Activated CD4-positive, alpha-beta T cell treated with anti-CD3 and anti-CD28 coated beads for 36 hours (primary cell): ENCODE measurements at regions of chr3 and their contacts with region 1.

Region 1: DNA sequence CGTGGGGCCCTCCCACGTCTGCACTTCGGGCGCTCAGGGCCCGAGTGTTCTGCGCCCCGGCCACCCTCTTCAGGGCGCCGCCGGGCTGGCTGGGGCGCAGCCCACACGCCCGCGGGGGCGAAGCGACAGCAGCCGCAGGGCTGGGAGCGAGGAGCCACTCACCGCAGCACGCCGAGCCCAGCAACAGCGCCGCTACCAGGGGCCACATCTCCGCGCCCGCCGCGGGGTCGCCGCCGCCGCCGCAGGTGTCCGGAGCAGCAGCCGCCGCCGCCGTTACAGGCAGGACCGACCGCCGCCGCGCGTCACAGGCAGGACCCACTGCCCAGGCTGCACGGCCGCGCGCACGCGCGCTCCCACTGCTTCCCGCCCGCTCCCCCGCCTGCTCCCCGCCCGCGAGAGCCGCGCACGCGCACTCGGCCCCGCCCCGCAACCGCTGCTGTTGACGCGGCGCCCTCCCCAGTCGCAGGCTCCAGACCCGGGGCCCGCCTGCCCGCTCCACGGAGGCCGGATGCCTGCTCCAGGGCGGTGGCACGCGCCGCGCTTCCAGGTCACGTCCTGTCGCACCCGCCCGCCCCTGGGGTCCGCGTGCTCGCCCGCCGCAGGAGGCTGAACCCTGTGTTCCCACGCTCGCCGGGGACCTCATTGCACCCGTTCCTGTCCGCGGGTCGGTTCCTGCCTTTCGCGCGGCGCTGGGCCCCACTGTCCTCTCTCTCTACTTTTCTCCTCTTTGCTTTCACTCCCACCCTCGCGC is at the start of gene CD47:
- DNase-seq: peak; percentile 97
- ATAC-seq: peak; percentile 63
- H3K4me3 Mint-ChIP-seq: no peak within 1 kb of the TSS
- H3K27ac Mint-ChIP-seq: peak within 1 kb of the TSS; percentile 100
- H3K4me1 Mint-ChIP-seq: peaks cover 31% of the 10 kb centered on the region
- H3K27me3 Mint-ChIP-seq: no peaks in the 10 kb centered on the region
- total RNA-seq, gene CD47: 58.6 to 104 TPM

Region 2: DNA sequence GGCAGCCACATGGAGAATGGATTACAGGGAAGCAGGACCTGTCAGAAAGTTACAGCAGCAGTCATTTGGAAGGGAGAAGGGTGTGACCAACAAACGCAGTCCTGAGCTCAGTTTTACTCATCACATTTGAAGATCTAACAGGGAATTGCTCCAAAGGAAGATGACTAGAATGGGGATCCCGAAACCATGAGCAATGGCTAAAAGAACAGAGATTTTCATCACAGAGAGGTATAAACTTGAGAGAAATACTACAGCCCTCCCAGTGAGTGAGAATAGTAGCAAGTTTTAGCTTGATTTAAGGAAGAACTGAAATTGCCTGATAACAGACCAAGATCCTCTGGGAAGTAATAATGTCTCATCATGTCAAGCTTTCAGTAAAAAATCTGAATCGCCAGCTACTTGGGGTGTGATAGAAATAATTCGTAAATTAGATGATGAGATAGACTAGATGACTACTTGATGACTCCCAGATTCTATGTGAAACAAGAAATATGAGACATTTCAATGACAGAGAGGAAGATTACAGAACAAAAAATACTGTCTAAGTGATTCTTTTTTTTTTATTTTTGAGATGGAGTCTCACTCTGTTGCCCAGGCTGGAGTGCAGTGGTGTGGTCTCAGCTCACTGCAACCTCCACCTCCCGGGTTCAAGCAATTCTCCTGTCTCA is 17.0 kb before region 1 on chr3:
- CTCF ChIA-PET with region 1: interaction called, 10 read pairs
- POLR2A ChIA-PET with region 1: interaction called, 5 read pairs
- intact Hi-C with region 1: loop called in 1 of 2 experiments (anchors 2 kb)
- DNase-seq: no peak
- ATAC-seq: peak; percentile 54
- H3K4me3 Mint-ChIP-seq: no peak overlapping the region
- H3K27ac Mint-ChIP-seq: peak overlapping the region; percentile 66
- H3K4me1 Mint-ChIP-seq: peaks cover 77% of the 10 kb centered on the region
- H3K27me3 Mint-ChIP-seq: no peaks in the 10 kb centered on the region

Region 3: GRCh38 chr3:108117241-108117775 is 26.4 kb after region 1 on chr3:
- CTCF ChIA-PET with region 1: interaction called, 7 read pairs
- POLR2A ChIA-PET with region 1: interaction called, 78 read pairs
- intact Hi-C with region 1: loop called in 1 of 2 experiments (anchors 1 kb)
- DNase-seq: peak; percentile 28
- ATAC-seq: peak; percentile 53
- H3K4me3 Mint-ChIP-seq: no peak overlapping the region
- H3K27ac Mint-ChIP-seq: peak overlapping the region; percentile 66
- H3K4me1 Mint-ChIP-seq: peaks cover 42% of the 10 kb centered on the region
- H3K27me3 Mint-ChIP-seq: no peaks in the 10 kb centered on the region

Region 4: DNA sequence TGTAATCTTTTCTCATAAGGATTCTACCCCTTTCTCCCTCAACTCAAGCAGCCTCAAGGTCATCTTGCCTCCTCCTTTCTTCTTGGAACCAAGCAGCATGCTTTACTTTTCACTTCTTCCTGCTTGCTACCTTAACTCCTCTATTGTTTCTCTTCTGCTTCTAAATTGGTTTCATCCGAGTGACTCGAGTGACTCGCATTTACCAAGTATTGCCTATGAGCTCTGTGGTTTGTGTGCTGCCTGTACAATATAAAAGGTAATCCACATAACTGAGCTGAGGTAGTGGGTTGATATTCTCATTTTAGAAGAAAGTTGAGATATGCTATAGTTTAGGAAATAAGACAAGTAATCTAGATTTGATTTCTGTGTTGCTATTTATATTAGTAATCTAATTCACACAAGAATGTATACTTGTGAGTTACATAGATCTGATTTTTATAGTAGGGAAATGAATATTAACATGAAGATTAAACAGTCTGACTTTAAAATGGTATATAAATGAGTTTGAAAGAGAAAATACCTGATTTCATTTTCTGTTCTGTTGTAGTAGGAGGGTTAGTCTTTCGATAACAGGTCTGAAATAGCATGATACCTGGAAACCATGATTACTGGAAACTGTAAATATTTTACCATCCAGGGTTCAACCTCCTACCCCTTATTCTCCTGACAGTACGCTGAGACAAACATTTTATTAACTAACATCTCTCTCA is 211.0 kb after region 1 on chr3:
- CTCF ChIA-PET with region 1: no interaction called
- POLR2A ChIA-PET with region 1: no interaction called
- intact Hi-C with region 1: loop called (anchors 2 to 10 kb)
- DNase-seq: peak; percentile 33
- ATAC-seq: peak; percentile 86
- H3K4me3 Mint-ChIP-seq: peak overlapping the region; percentile 45
- H3K27ac Mint-ChIP-seq: peak overlapping the region; percentile 83
- H3K4me1 Mint-ChIP-seq: peaks cover 43% of the 10 kb centered on the region
- H3K27me3 Mint-ChIP-seq: peaks cover 2% of the 10 kb centered on the region

Region 5: DNA sequence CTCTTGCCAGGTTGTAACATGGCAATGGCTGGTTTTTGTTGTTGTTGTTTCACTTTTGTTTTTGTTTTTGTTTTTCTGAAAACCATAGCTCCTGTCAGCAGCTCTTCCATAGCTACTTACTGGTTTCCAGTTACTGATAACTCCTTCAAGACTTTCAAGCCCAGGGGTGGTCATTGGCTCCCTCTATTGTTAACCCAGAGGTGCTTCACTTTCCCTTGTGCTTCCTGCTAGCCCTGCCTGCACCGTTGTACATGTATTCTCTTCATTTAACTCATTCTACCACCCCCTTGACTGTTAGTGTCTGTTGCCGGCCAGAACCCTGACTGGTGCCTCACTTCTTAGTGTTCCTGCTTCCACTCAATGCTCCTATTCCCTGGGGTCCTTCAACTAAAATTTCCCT is 727.5 kb after region 1 on chr3:
- CTCF ChIA-PET with region 1: no interaction called
- POLR2A ChIA-PET with region 1: no interaction called
- intact Hi-C with region 1: loop called in 1 of 2 experiments (anchors 5 kb)
- DNase-seq: peak; percentile 76
- ATAC-seq: peak; percentile 90
- H3K4me3 Mint-ChIP-seq: peak overlapping the region; percentile 18
- H3K27ac Mint-ChIP-seq: peak overlapping the region; percentile 22
- H3K4me1 Mint-ChIP-seq: peaks cover 36% of the 10 kb centered on the region
- H3K27me3 Mint-ChIP-seq: no peaks in the 10 kb centered on the region